ENCODE measurements at regions of chr22 and their contacts with region 1.

Region 1: GRCh38 chr22:43014869-43015676 is at the start of gene PACSIN2:
- DNase-seq: peak; percentile 96
- H3K4me3 ChIP-seq: peak within 1 kb of the TSS; percentile 86
- H3K27ac ChIP-seq: no peak within 1 kb of the TSS
- H3K27me3 ChIP-seq: no peaks in the 10 kb centered on the region
- CTCF ChIP-seq: no peak
- polyA plus RNA-seq, gene PACSIN2: 59.6 and 60.2 TPM in 2 replicates

Region 2: DNA sequence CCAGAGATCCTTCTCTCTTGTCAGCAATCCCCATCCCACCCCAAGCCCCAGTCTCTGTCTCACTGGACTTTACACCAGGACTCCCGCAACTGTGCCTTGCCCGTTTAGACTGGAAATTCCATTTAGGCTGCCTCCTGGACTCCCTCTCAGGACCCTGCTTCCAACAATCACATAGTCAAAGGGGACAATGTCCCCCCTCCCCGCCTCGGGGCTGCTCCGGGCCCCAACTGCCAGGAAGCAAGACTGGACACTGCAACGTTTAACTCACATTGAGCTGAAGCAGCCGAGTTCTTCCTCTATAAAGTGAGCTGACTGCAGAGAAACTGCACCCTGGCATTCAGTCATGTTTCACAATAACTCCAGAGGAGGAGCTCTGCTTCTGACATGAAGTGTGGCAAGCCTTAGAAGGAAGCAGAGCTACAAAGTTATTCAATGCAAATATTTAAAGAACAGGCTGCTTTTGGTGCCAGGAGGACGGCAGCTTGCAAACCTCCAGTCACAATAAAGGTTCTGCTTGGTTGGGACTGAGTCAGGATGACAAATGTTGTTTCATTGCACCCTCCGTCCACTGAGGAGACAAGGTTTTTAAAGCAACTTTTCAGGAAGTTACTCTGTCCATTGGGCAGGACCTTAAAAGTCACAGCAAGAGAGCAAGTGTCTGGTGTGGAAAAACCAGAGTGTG is 20.1 kb before region 1 on chr22:
- CTCF ChIA-PET with region 1: interaction called, 15 read pairs
- POLR2A ChIA-PET with region 1: interaction called, 29 read pairs
- DNase-seq: peak; percentile 82
- H3K4me3 ChIP-seq: peak overlapping the region; percentile 55
- H3K27ac ChIP-seq: peak overlapping the region; percentile 93
- H3K27me3 ChIP-seq: no peaks in the 10 kb centered on the region
- CTCF ChIP-seq: no peak

Region 3: GRCh38 chr22:43001271-43002201 is 13.5 kb before region 1 on chr22:
- CTCF ChIA-PET with region 1: interaction called, 4 read pairs
- POLR2A ChIA-PET with region 1: interaction called, 12 read pairs
- DNase-seq: no peak
- H3K4me3 ChIP-seq: peak overlapping the region; percentile 37
- H3K27ac ChIP-seq: peak overlapping the region; percentile 93
- H3K27me3 ChIP-seq: no peaks in the 10 kb centered on the region
- CTCF ChIP-seq: no peak

Region 4: GRCh38 chr22:43088979-43089717 is 74.1 kb after region 1 on chr22 and contains the start of gene TTLL1:
- CTCF ChIA-PET with region 1: no interaction called
- POLR2A ChIA-PET with region 1: no interaction called
- DNase-seq: peak; percentile 39
- H3K4me3 ChIP-seq: peak within 1 kb of the TSS; percentile 84
- H3K27ac ChIP-seq: peak within 1 kb of the TSS; percentile 39
- H3K27me3 ChIP-seq: no peaks in the 10 kb centered on the region
- CTCF ChIP-seq: no peak
- polyA plus RNA-seq, gene TTLL1: 17.5 and 18.8 TPM in 2 replicates